Ascending aorta (tissue), 2 donors: ENCODE measurements at regions of chr15 and their contacts with region 1.

Region 1: DNA sequence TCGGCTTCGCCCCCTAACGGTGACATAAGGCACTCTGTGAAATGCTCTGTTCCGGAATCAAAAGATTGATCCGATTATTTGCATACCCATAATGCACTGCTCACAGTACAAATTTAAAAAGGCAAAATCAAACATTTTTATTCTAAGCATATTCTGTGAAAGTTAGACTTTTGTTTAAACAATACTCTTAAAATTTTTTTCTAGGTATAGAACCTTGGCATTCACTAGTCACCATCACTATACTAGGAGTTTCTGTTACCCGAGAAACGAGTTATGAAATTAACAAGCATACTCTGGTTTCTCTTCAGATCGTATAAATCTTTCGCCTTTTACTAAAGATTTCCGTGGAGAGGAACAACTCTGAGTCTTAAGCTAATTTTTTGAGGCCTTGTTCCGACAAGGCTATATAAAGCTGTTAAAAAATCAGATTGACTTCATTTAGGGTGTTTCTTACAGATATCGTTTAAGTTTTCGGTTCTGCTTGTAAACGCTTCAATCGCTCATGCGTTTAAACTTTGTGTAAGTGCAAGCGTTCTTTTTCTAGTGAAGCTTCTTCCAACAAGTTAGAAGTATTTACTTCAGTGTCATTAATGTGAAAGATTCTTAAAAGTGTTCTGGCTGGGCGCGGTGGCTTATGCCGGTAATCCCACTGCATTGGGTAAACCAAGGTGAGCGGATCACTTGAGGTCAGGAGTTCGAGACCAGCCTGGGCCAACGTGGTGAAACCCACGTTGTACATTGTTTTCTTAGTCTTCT is at the start of gene RNU5B-1:
- DNase-seq: peak in 1 of 2 donors; percentile 85
- H3K4me3 ChIP-seq: peak within 1 kb of the TSS; percentile 58 to 73
- H3K27ac ChIP-seq: peak within 1 kb of the TSS; percentile 81 to 85
- H3K4me1 ChIP-seq: peaks cover 0 to 9% of the 10 kb centered on the region in 2 donors
- H3K27me3 ChIP-seq: no peaks in the 10 kb centered on the region
- CTCF ChIP-seq: peak; percentile 74 to 87 (median 79)
- total RNA-seq, gene RNU5B-1: not detected

Region 2: DNA sequence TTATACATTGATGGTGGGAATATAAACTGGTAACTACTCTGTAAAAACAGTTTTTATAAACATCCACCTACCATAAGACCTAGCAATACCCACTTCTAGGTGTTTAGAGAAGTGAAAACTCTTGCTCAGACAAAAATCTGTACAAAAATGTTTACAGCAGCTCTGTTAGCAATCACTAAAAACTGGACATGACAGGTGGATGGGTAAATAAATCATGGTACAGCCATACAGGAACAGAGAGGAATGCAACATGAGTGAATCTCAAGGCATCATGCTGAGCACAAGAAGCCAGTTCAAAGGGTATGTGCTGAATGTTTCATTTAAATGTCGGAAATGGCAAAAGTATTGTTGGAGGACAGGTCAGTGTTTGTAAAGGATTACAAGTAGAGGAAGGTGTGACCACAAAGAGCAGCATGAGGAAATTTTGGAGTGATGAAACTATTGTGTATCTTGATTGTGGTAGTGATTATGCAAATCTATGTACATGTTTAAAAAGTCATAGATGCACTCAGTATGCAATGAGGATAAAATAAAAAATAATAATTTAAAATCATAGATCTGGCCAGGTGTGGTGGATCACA is 11.5 kb before region 1 on chr15:
- intact Hi-C with region 1: loop called (anchors 1 kb)
- DNase-seq: no peak
- H3K4me3 ChIP-seq: no peak overlapping the region
- H3K27ac ChIP-seq: no peak overlapping the region
- H3K4me1 ChIP-seq: peaks cover 0 to 9% of the 10 kb centered on the region in 2 donors
- H3K27me3 ChIP-seq: no peaks in the 10 kb centered on the region
- CTCF ChIP-seq: no peak

Region 3: GRCh38 chr15:65666257-65666656 is 361.7 kb after region 1 on chr15:
- intact Hi-C with region 1: no loop called
- DNase-seq: no peak
- H3K4me3 ChIP-seq: no peak overlapping the region
- H3K27ac ChIP-seq: no peak overlapping the region
- H3K4me1 ChIP-seq: no peaks in the 10 kb centered on the region
- H3K27me3 ChIP-seq: no peaks in the 10 kb centered on the region
- CTCF ChIP-seq: no peak